ENCODE measurements at regions of chr5 and their contacts with region 1.

Region 1: GRCh38 chr5:121870489-121870888 is 18.8 kb downstream of the FTMT start:
- DNase-seq: peak; percentile 16
- H3K4me3 ChIP-seq: no peak overlapping the region
- H3K27ac ChIP-seq: no peak overlapping the region
- H3K4me1 ChIP-seq: no peaks in the 10 kb centered on the region
- H3K27me3 ChIP-seq: peaks cover 10% of the 10 kb centered on the region
- CTCF ChIP-seq: peak; percentile 35; the same call in 1 of the 2 replicates

Region 2: DNA sequence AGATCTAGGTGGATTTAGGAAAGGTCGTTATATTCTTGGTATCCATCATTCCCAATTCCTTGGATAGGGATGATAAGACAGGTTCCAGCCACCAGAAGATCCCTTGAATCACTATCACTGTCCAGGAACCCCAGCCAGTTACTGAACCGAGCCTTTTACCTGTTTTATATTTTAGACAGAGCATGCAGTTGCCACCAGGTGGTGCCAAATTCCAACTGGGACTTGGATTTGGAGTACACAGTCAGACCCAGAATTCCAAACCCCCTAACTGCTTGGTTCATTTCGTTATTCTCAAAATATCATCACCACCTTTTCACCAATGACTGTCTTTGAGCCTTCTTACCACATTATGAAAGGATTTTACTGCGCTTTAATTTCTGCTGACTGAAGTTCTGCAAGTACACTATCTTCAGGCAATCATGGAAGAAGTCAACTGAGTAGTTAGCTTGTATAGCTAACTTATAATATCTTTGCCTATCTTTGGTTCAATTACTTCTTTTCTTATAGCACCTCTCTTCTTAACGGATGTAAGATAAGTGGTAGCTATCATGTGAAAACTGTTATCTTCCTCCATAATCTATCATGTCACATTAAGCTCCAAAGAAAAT is 1214.6 kb before region 1 on chr5:
- CTCF ChIA-PET with region 1: no interaction called
- POLR2A ChIA-PET with region 1: no interaction called
- intact Hi-C with region 1: loop called (anchors 5 kb)
- DNase-seq: peak; percentile 60
- H3K4me3 ChIP-seq: no peak overlapping the region
- H3K27ac ChIP-seq: no peak overlapping the region
- H3K4me1 ChIP-seq: no peaks in the 10 kb centered on the region
- H3K27me3 ChIP-seq: no peaks in the 10 kb centered on the region
- CTCF ChIP-seq: peak; percentile 80

Region 3: DNA sequence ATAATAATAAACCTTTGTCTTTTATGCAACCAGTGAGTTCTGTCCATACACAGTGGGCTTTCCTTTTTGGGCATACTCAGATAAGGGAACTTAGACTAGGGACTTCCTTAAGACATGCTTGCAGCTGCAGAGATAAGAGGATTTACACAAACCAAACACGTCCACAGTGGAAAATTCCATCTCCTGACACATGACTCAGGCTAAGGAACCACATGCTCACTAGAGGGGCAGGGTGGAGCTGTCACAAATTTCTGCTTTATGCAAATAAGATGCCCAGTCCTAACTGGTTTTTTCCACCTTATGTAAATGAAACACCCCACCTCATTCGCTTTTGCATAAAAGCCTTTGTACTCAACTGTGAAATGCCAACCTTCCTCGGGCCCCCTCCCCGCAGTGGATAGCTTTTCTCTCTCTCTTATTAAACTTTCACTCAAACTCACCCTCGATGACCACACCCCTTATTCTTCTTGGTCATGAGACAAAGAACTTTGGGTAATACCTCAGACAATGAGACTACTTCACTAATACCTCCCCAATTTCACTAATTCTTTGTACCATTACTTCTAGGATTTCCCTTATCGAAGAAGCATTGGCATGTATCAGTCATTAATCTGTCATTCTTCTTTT is 189.1 kb before region 1 on chr5:
- CTCF ChIA-PET with region 1: no interaction called
- POLR2A ChIA-PET with region 1: no interaction called
- intact Hi-C with region 1: no loop called
- DNase-seq: no peak
- H3K4me3 ChIP-seq: no peak overlapping the region
- H3K27ac ChIP-seq: no peak overlapping the region
- H3K4me1 ChIP-seq: no peaks in the 10 kb centered on the region
- H3K27me3 ChIP-seq: no peaks in the 10 kb centered on the region
- CTCF ChIP-seq: no peak

Region 4: DNA sequence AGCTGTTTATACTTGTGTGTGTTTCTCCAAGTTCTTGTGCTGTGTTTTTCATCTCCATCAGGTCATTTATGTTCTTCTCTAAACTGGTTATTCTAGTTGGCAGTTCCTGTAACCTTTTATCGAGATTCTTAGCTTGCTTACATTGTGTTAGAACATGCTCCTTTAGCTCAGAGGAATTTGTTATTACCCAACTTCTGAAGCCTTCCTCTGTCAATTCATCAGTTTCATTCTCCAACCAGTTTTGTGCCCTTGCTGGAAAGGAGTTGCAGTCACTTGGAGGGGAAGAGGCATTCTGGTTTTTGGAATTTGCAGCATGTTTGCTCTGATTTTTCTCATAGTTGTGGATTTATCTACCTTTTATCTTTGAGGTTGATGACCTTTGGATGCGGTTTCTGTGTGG is 145.0 kb before region 1 on chr5:
- CTCF ChIA-PET with region 1: no interaction called
- POLR2A ChIA-PET with region 1: no interaction called
- intact Hi-C with region 1: no loop called
- DNase-seq: no peak
- H3K4me3 ChIP-seq: no peak overlapping the region
- H3K27ac ChIP-seq: no peak overlapping the region
- H3K4me1 ChIP-seq: no peaks in the 10 kb centered on the region
- H3K27me3 ChIP-seq: no peaks in the 10 kb centered on the region
- CTCF ChIP-seq: no peak

Region 5: GRCh38 chr5:121819682-121820261 is 50.7 kb before region 1 on chr5:
- CTCF ChIA-PET with region 1: no interaction called
- POLR2A ChIA-PET with region 1: interaction called, 11 read pairs
- intact Hi-C with region 1: no loop called
- DNase-seq: no peak
- H3K4me3 ChIP-seq: no peak overlapping the region
- H3K27ac ChIP-seq: no peak overlapping the region
- H3K4me1 ChIP-seq: no peaks in the 10 kb centered on the region
- H3K27me3 ChIP-seq: no peaks in the 10 kb centered on the region
- CTCF ChIP-seq: no peak

Measured in A673 (cell line).